Activated T-helper 2 cell treated with anti-CD3 and anti-CD28 coated beads, Interferon-gamma antibody, Interleukin-2, Interleukin-4, amounts not matched to agents 10 μg/mL and 5 μg/mL and 100 μg/mL, durations not matched to agents 14 hours and 24 hours and 36 hours (primary cell): ENCODE measurements at regions of chr22 and their contacts with region 1.

Region 1: GRCh38 chr22:35430897-35431322 is 31.0 kb downstream of the MCM5 start:
- DNase-seq: peak; percentile 45
- H3K4me3 Mint-ChIP-seq: no peak overlapping the region
- H3K27ac Mint-ChIP-seq: no peak overlapping the region
- H3K4me1 Mint-ChIP-seq: peaks cover 2% of the 10 kb centered on the region
- H3K27me3 Mint-ChIP-seq: no peaks in the 10 kb centered on the region

Region 2: GRCh38 chr22:35454416-35455054 is 23.6 kb after region 1 on chr22:
- intact Hi-C with region 1: no loop called
- DNase-seq: no peak
- H3K4me3 Mint-ChIP-seq: no peak overlapping the region
- H3K27ac Mint-ChIP-seq: no peak overlapping the region
- H3K4me1 Mint-ChIP-seq: no peaks in the 10 kb centered on the region
- H3K27me3 Mint-ChIP-seq: no peaks in the 10 kb centered on the region

Region 3: GRCh38 chr22:35582861-35583670 is 152.2 kb after region 1 on chr22:
- intact Hi-C with region 1: loop called (anchors 2 kb)
- DNase-seq: peak; percentile 36
- H3K4me3 Mint-ChIP-seq: no peak overlapping the region
- H3K27ac Mint-ChIP-seq: no peak overlapping the region
- H3K4me1 Mint-ChIP-seq: no peaks in the 10 kb centered on the region
- H3K27me3 Mint-ChIP-seq: no peaks in the 10 kb centered on the region

Region 4: GRCh38 chr22:35622191-35622913 is 191.4 kb after region 1 on chr22:
- intact Hi-C with region 1: loop called (anchors 2 kb)
- DNase-seq: no peak
- H3K4me3 Mint-ChIP-seq: no peak overlapping the region
- H3K27ac Mint-ChIP-seq: no peak overlapping the region
- H3K4me1 Mint-ChIP-seq: peaks cover 4% of the 10 kb centered on the region
- H3K27me3 Mint-ChIP-seq: peaks cover 14% of the 10 kb centered on the region